ENCODE measurements at regions of chr2 and their contacts with region 1.

Region 1: GRCh38 chr2:127174136-127174535 is 46.0 kb downstream of the CYP27C1 start:
- DNase-seq: no peak
- ATAC-seq: peak; percentile 19 to 58 (median 32)
- H3K4me3 ChIP-seq: no peak overlapping the region
- H3K27ac ChIP-seq: no peak overlapping the region
- H3K4me1 ChIP-seq: peaks cover 0 to 17% (median 7%) of the 10 kb centered on the region in 4 donors
- H3K27me3 ChIP-seq: no peaks in the 10 kb centered on the region
- CTCF ChIP-seq: peak; percentile 17 to 52 (median 34)
- POLR2A ChIP-seq: no peak

Region 2: GRCh38 chr2:127072970-127073369 is 101.2 kb before region 1 on chr2:
- intact Hi-C with region 1: loop called (anchors 10 kb)
- DNase-seq: no peak
- ATAC-seq: no peak
- H3K4me3 ChIP-seq: no peak overlapping the region
- H3K27ac ChIP-seq: no peak overlapping the region
- H3K4me1 ChIP-seq: peaks cover 0 to 11% (median under 1%) of the 10 kb centered on the region in 4 donors
- H3K27me3 ChIP-seq: no peaks in the 10 kb centered on the region
- CTCF ChIP-seq: no peak
- POLR2A ChIP-seq: no peak

Measured in right lobe of liver (tissue), 6 donors.